H1 (cell line): ENCODE measurements at regions of chr1 and their contacts with region 1.

Region 1: DNA sequence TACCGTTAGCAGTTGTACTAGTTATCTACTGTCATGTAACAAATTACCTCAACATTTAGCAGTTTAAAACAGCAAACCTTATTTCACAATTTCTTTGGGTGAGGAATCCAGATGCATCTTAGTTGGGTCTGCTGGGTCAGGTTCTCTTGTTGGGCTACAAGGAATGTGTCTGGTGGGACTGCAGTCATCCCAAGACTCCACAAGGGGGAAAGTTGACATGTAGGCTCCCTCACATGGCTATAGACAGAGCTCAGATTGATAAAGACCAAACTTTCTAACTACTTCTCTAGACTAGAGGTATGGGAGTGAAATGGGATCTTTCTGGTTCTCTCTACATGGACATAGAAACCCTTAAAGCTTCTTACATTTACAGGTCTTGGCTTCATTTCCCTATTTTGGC is 160.9 kb downstream of the UCK2 start:
- DNase-seq: no peak
- H3K4me3 ChIP-seq: no peak overlapping the region
- H3K27ac ChIP-seq: no peak overlapping the region
- H3K4me1 ChIP-seq: no peaks in the 10 kb centered on the region
- H3K27me3 ChIP-seq: no peaks in the 10 kb centered on the region
- CTCF ChIP-seq: peak in 2 of 3 experiments; percentile 34 to 37; a peak in 2 of 4 replicates
- EP300 ChIP-seq: no peak
- POLR2A ChIP-seq: no peak
- RAD21 ChIP-seq: peak; percentile 42 to 46

Region 2: GRCh38 chr1:165871311-165872067 is 116.8 kb before region 1 on chr1:
- CTCF ChIA-PET with region 1: no interaction called
- POLR2A ChIA-PET with region 1: no interaction called
- DNase-seq: peak in 1 of 2 experiments; percentile 64
- H3K4me3 ChIP-seq: no peak overlapping the region
- H3K27ac ChIP-seq: no peak overlapping the region
- H3K4me1 ChIP-seq: peaks cover 0 to 11% (median 2%) of the 10 kb centered on the region in 4 experiments; a peak in 1 of 7 replicates
- H3K27me3 ChIP-seq: no peaks in the 10 kb centered on the region
- CTCF ChIP-seq: peak; percentile 57 to 75 (median 74)
- EP300 ChIP-seq: no peak
- POLR2A ChIP-seq: no peak
- RAD21 ChIP-seq: peak; percentile 50 to 62

Region 3: DNA sequence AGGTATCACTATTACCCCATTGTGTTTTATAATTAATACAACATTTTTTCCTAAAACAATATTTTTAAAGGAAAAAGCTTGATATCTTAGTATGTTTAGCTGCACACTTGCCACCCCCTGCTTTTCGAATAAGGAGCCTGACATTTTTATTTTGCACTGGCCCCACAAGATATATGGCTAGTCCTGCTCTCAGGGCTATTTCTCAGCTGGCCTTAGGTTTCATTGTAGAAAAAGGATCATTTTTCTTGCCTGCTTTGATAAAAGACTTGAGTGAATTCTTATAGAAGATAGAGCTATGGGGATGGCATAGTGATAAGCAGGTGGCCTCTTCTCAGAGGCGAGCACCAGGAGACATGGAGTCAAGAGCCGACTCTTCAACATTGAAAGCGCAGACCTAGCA is 11.6 kb after region 1 on chr1:
- CTCF ChIA-PET with region 1: interaction called, 15 read pairs
- POLR2A ChIA-PET with region 1: no interaction called
- DNase-seq: no peak
- H3K4me3 ChIP-seq: no peak overlapping the region
- H3K27ac ChIP-seq: no peak overlapping the region
- H3K4me1 ChIP-seq: no peaks in the 10 kb centered on the region
- H3K27me3 ChIP-seq: no peaks in the 10 kb centered on the region
- CTCF ChIP-seq: no peak
- EP300 ChIP-seq: no peak
- POLR2A ChIP-seq: no peak
- RAD21 ChIP-seq: no peak